ENCODE measurements at regions of chr17 and their contacts with region 1.

Region 1: DNA sequence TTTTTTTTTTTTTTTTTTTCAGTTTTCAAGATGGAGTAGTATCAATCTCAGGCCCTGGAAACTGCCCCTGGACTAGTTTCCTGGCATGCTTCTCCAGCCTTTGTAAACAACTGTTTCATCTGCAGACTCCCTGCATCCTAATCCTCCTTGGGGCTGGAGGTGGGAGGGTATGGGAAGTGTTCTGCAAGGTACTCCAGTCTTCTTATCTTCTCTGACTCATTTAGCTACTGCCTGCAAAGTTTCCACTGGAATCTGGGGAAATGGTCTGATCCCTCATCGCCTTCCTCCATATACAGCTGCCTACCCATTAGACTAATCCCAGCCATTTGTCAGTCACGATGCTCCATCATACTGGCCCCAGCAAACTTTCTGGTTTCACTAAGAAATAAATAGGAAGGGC is 21.5 kb downstream of the COPZ2 start:
- DNase-seq: no peak
- CTCF ChIP-seq: no peak

Region 2: DNA sequence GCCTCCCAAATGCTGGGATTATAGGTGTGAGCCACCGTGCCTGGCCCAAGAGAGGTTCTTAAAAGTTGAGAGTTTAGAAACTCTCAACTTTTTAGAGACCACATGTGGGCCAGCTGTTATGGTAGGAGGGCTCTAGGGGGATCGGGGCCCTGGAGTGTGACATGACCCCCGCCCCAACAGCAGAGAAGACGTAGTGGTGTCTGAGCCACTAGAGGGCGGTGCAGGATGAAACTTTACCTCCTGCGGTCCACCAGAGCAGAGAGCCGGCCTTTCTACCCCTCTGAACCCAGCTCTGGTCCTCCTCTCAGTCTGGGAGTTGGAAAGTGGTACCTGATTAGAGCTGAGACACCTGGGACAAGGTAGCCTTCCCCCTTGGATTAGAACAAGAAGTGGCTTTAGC is 37.8 kb before region 1 on chr17:
- in situ Hi-C with region 1: loop called (anchors 5 kb)
- DNase-seq: peak; percentile 85
- CTCF ChIP-seq: peak; percentile 75

Region 3: DNA sequence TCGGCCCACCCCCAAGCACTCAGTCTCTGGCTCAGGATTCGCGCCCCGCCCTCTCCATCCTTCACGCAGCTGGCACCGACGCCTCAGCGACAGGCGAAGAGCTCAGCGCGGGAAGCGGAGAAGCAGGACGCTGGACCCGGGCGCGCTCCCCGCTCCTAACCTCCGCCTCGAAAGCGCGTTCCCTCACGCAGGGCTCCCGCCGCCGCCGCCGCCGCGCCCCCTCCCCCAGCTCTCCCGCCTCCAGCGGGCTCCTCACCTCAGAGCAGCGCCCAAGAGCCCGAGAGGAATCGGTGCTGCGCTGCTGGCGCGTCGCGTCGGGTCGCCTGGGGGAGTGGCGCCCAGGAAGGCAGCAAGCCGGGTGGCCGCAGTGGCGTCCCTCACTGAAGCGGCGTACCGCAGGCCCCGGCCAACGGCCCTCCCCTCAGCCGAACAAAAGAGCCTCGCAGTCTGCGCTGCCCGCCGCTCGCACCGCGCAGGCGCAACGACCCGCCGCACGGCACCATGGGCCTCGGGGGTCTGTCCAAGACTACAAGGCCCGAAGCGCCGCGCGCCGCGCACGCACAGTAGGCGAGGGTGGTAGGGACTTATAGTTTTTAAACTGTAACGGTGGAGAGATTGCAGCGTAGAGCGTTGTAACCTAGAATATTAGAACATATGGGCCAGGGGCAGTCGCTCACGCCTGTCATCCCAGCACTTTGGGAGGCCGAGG is 85.1 kb after region 1 on chr17 and contains the start of gene CBX1:
- in situ Hi-C with region 1: no loop called
- DNase-seq: peak; percentile 93
- CTCF ChIP-seq: no peak